ENCODE measurements at regions of chr3 and their contacts with region 1.

Region 1: GRCh38 chr3:52456169-52456799 is 880 bp downstream of the NISCH start:
- DNase-seq: no peak
- ATAC-seq: peak; percentile 39
- H3K4me3 ChIP-seq: peak overlapping the region; percentile 99
- H3K27ac ChIP-seq: no peak overlapping the region
- H3K4me1 ChIP-seq: peaks cover 22% of the 10 kb centered on the region
- H3K27me3 ChIP-seq: no peaks in the 10 kb centered on the region
- CTCF ChIP-seq: no peak

Region 2: GRCh38 chr3:52670621-52671521 is 214.6 kb after region 1 on chr3:
- CTCF ChIA-PET with region 1: no interaction called
- POLR2A ChIA-PET with region 1: interaction called, 30 read pairs
- intact Hi-C with region 1: no loop called
- DNase-seq: peak; percentile 99
- ATAC-seq: peak; percentile 96
- H3K4me3 ChIP-seq: peak overlapping the region; percentile 49
- H3K27ac ChIP-seq: peak overlapping the region; percentile 97
- H3K4me1 ChIP-seq: peaks cover 26% of the 10 kb centered on the region
- H3K27me3 ChIP-seq: no peaks in the 10 kb centered on the region
- CTCF ChIP-seq: 0 out of 2 replicates have a peak, but pooled peaks have one; percentile 11

Measured in PC-3 (cell line).